Prostate gland (tissue), 2 donors: ENCODE measurements at regions of chr11 and their contacts with region 1.

Region 1: GRCh38 chr11:74248469-74248868 is 63.0 kb downstream of the P4HA3 start:
- DNase-seq: no peak
- H3K4me3 ChIP-seq: no peak overlapping the region
- H3K27ac ChIP-seq: no peak overlapping the region
- H3K4me1 ChIP-seq: no peaks in the 10 kb centered on the region
- H3K27me3 ChIP-seq: no peaks in the 10 kb centered on the region
- CTCF ChIP-seq: no peak
- POLR2A ChIP-seq: no peak

Region 2: GRCh38 chr11:73965076-73965860 is 283.2 kb before region 1 on chr11:
- intact Hi-C with region 1: loop called (anchors 10 kb)
- DNase-seq: no peak
- H3K4me3 ChIP-seq: no peak overlapping the region
- H3K27ac ChIP-seq: no peak overlapping the region
- H3K4me1 ChIP-seq: no peaks in the 10 kb centered on the region
- H3K27me3 ChIP-seq: no peaks in the 10 kb centered on the region
- CTCF ChIP-seq: no peak
- POLR2A ChIP-seq: no peak

Region 3: GRCh38 chr11:74094400-74094799 is 154.1 kb before region 1 on chr11:
- intact Hi-C with region 1: no loop called
- DNase-seq: no peak
- H3K4me3 ChIP-seq: no peak overlapping the region
- H3K27ac ChIP-seq: no peak overlapping the region
- H3K4me1 ChIP-seq: no peaks in the 10 kb centered on the region
- H3K27me3 ChIP-seq: no peaks in the 10 kb centered on the region
- CTCF ChIP-seq: no peak
- POLR2A ChIP-seq: no peak